CD4-positive, alpha-beta T cell (primary cell): ENCODE measurements at regions of chrX and their contacts with region 1.

Region 1: DNA sequence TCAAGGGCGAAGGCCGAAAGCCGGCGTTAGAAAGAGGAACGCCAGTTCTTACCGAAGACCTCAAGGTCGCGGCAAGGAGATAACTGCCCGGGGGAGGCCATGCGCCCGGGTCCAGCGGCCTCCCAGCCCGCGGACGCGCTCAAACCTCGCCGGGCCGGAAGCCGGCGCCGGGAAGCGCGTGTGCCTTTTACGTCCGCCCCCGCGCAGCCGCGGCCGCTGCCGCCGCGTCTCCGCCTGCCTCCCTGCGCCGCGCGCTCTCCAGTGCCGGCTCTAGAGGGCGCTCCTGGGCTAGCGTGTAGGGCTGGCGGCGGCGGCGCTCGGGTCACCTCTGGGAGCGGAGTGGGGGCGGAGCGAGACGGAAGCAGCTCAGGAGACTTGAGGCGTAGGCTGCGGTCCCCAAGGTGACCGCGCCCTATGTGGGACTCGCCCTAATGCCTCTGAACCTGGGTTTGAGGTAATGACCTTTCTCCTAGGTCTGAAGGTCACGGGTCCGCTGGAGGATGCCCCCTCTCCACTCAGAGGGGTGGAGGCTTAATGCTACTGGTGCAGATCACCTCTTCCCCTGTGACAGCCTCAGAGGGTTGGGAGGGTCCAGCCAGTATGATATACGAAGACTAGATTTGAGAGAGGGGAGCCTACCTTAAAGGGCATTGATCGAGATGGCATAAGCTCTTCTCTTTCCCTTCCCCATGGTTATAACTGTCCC is 839 bp downstream of the SLC25A5 start:
- DNase-seq: peak; percentile 76 to 93 (median 84)
- ATAC-seq: peak; percentile 77
- H3K4me3 ChIP-seq: peak overlapping the region; percentile 92
- H3K4me3 Mint-ChIP-seq: peak overlapping the region; percentile 93
- H3K27ac ChIP-seq: peak overlapping the region; percentile 84 to 97
- H3K27ac Mint-ChIP-seq: peak overlapping the region; percentile 89
- H3K4me1 ChIP-seq: peaks cover 18% of the 10 kb centered on the region
- H3K4me1 Mint-ChIP-seq: peaks cover 10% of the 10 kb centered on the region
- H3K27me3 ChIP-seq: no peaks in the 10 kb centered on the region
- H3K27me3 Mint-ChIP-seq: no peaks in the 10 kb centered on the region
- CTCF ChIP-seq: peak; percentile 70

Region 2: DNA sequence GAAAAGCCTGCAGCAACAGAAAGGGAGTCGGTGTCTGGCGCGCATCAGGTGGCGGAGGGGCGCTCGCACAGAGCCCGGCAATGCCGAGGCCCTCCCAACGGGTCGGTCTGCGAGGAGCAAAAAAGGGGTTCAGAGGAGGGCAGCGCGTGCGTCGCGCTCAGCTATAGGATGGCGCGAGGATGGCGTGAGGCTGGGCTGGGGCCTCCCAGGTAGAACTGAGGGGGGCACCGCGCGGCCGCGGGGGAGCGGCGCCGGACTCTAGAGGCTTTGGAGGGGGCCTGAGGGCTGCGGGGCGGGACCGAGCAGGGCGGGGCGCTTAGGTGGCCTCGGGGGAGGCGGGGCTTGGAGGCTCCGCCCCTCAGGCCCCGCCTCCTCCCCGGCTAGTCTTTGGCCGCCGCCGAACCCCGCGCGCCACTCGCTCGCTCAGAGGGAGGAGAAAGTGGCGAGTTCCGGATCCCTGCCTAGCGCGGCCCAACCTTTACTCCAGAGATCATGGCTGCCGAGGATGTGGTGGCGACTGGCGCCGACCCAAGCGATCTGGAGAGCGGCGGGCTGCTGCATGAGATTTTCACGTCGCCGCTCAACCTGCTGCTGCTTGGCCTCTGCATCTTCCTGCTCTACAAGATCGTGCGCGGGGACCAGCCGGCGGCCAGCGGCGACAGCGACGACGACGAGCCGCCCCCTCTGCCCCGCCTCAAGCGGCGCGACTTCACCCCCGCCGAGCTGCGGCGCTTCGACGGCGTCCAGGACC is 233.0 kb before region 1 on chrX and contains the start of gene PGRMC1:
- CTCF ChIA-PET with region 1: no interaction called
- POLR2A ChIA-PET with region 1: no interaction called
- intact Hi-C with region 1: loop called in 1 of 2 experiments (anchors 5 kb)
- DNase-seq: peak; percentile 61 to 91 (median 78)
- ATAC-seq: peak; percentile 94
- H3K4me3 ChIP-seq: peak within 1 kb of the TSS; percentile 73
- H3K4me3 Mint-ChIP-seq: peak within 1 kb of the TSS; percentile 92
- H3K27ac ChIP-seq: peak within 1 kb of the TSS in 1 of 2 donors; percentile 53
- H3K27ac Mint-ChIP-seq: peak within 1 kb of the TSS; percentile 57
- H3K4me1 ChIP-seq: peaks cover 21% of the 10 kb centered on the region
- H3K4me1 Mint-ChIP-seq: peaks cover 38% of the 10 kb centered on the region
- H3K27me3 ChIP-seq: no peaks in the 10 kb centered on the region
- H3K27me3 Mint-ChIP-seq: no peaks in the 10 kb centered on the region
- CTCF ChIP-seq: no peak
- total RNA-seq, gene PGRMC1: 14.9 to 16.0 TPM

Region 3: GRCh38 chrX:119482481-119483480 is 13.7 kb after region 1 on chrX:
- CTCF ChIA-PET with region 1: interaction called, 14 read pairs
- POLR2A ChIA-PET with region 1: interaction called, 10 read pairs
- intact Hi-C with region 1: no loop called
- DNase-seq: peak; percentile 36 to 80 (median 51)
- ATAC-seq: peak; percentile 87
- H3K4me3 ChIP-seq: peak overlapping the region; percentile 54
- H3K4me3 Mint-ChIP-seq: peak overlapping the region; percentile 70
- H3K27ac ChIP-seq: no peak overlapping the region
- H3K27ac Mint-ChIP-seq: peak overlapping the region; percentile 47
- H3K4me1 ChIP-seq: peaks cover 13% of the 10 kb centered on the region
- H3K4me1 Mint-ChIP-seq: peaks cover 10% of the 10 kb centered on the region
- H3K27me3 ChIP-seq: no peaks in the 10 kb centered on the region
- H3K27me3 Mint-ChIP-seq: no peaks in the 10 kb centered on the region
- CTCF ChIP-seq: peak; percentile 66

Region 4: GRCh38 chrX:119518371-119518770 is 49.3 kb after region 1 on chrX:
- CTCF ChIA-PET with region 1: no interaction called
- POLR2A ChIA-PET with region 1: no interaction called
- intact Hi-C with region 1: no loop called
- DNase-seq: no peak
- ATAC-seq: no peak
- H3K4me3 ChIP-seq: no peak overlapping the region
- H3K4me3 Mint-ChIP-seq: no peak overlapping the region
- H3K27ac ChIP-seq: no peak overlapping the region
- H3K27ac Mint-ChIP-seq: no peak overlapping the region
- H3K4me1 ChIP-seq: peaks cover 2% of the 10 kb centered on the region
- H3K4me1 Mint-ChIP-seq: peaks cover 5% of the 10 kb centered on the region
- H3K27me3 ChIP-seq: no peaks in the 10 kb centered on the region
- H3K27me3 Mint-ChIP-seq: no peaks in the 10 kb centered on the region
- CTCF ChIP-seq: no peak

Region 5: DNA sequence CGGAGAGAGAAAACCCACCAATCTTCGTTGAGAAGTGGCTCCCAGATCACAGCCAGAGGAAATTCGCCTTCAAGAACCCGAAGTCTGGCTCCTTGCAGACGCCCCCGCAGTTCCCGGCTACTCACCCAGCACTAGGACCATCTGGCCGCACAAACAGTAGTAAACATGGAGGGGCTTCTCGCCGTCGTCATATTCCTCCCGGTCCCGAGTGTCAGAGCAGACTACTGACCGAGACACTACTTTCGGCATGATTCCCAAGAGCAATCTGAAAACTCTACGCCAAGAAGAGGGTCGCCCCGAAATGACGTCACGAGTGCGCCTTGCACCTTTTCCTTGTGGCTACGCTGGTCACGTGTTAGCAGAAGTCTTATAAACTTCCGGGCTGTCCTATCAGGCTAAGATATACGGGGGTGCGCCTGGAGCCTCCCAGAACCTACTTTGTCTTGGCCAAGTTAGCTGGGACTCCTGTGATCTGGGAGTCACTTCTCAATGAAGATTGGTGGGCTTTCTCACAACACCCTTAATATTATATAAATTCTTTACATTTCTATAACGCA is 96.1 kb after region 1 on chrX and contains the start of gene STEEP1:
- CTCF ChIA-PET with region 1: interaction called, 3 read pairs
- POLR2A ChIA-PET with region 1: no interaction called
- intact Hi-C with region 1: loop called in 1 of 2 experiments (anchors 5 kb)
- DNase-seq: peak; percentile 67 to 93 (median 82)
- ATAC-seq: peak; percentile 96
- H3K4me3 ChIP-seq: peak within 1 kb of the TSS; percentile 75
- H3K4me3 Mint-ChIP-seq: peak within 1 kb of the TSS; percentile 97
- H3K27ac ChIP-seq: peak within 1 kb of the TSS; percentile 4 to 52
- H3K27ac Mint-ChIP-seq: peak within 1 kb of the TSS; percentile 94
- H3K4me1 ChIP-seq: peaks cover 9% of the 10 kb centered on the region
- H3K4me1 Mint-ChIP-seq: peaks cover 24% of the 10 kb centered on the region
- H3K27me3 ChIP-seq: no peaks in the 10 kb centered on the region
- H3K27me3 Mint-ChIP-seq: no peaks in the 10 kb centered on the region
- CTCF ChIP-seq: no peak
- total RNA-seq, gene STEEP1: 25.1 to 27.0 TPM

Region 6: GRCh38 chrX:119574394-119575266 is 105.5 kb after region 1 on chrX and contains the start of gene UBE2A:
- CTCF ChIA-PET with region 1: interaction called, 6 read pairs
- POLR2A ChIA-PET with region 1: interaction called, 11 read pairs
- intact Hi-C with region 1: loop called in 1 of 2 experiments (anchors 5 kb)
- DNase-seq: peak; percentile 81 to 94 (median 86)
- ATAC-seq: peak; percentile 90
- H3K4me3 ChIP-seq: peak within 1 kb of the TSS; percentile 75
- H3K4me3 Mint-ChIP-seq: peak within 1 kb of the TSS; percentile 94
- H3K27ac ChIP-seq: peak within 1 kb of the TSS; percentile 65 to 80
- H3K27ac Mint-ChIP-seq: peak within 1 kb of the TSS; percentile 97
- H3K4me1 ChIP-seq: peaks cover 14% of the 10 kb centered on the region
- H3K4me1 Mint-ChIP-seq: peaks cover 28% of the 10 kb centered on the region
- H3K27me3 ChIP-seq: no peaks in the 10 kb centered on the region
- H3K27me3 Mint-ChIP-seq: no peaks in the 10 kb centered on the region
- CTCF ChIP-seq: no peak
- total RNA-seq, gene UBE2A: 88.8 to 101 TPM

Region 7: GRCh38 chrX:119753571-119754257 is 284.6 kb after region 1 on chrX:
- CTCF ChIA-PET with region 1: no interaction called
- POLR2A ChIA-PET with region 1: interaction called, 15 read pairs
- intact Hi-C with region 1: no loop called
- DNase-seq: peak in 11 of 14 experiments; percentile 14 to 89 (median 48)
- ATAC-seq: peak; percentile 65
- H3K4me3 ChIP-seq: no peak overlapping the region
- H3K4me3 Mint-ChIP-seq: peak overlapping the region; percentile 91
- H3K27ac ChIP-seq: peak overlapping the region in 1 of 2 donors; percentile 48
- H3K27ac Mint-ChIP-seq: peak overlapping the region; percentile 97
- H3K4me1 ChIP-seq: peaks cover 52% of the 10 kb centered on the region
- H3K4me1 Mint-ChIP-seq: peaks cover 44% of the 10 kb centered on the region
- H3K27me3 ChIP-seq: no peaks in the 10 kb centered on the region
- H3K27me3 Mint-ChIP-seq: no peaks in the 10 kb centered on the region
- CTCF ChIP-seq: peak; percentile 40